ENCODE measurements at regions of chr12 and their contacts with region 1.

Region 1: GRCh38 chr12:53267999-53268647 is at the start of gene ESPL1:
- DNase-seq: peak; percentile 87
- H3K4me3 Mint-ChIP-seq: peak within 1 kb of the TSS; percentile 99
- H3K27ac Mint-ChIP-seq: peak within 1 kb of the TSS; percentile 93
- H3K4me1 Mint-ChIP-seq: peaks cover 50% of the 10 kb centered on the region
- H3K27me3 Mint-ChIP-seq: no peaks in the 10 kb centered on the region

Region 2: GRCh38 chr12:53220801-53221202 is 47.3 kb before region 1 on chr12:
- CTCF ChIA-PET with region 1: interaction called, 148 read pairs
- DNase-seq: peak; percentile 88
- H3K4me3 Mint-ChIP-seq: peak overlapping the region; percentile 99
- H3K27ac Mint-ChIP-seq: peak overlapping the region; percentile 95
- H3K4me1 Mint-ChIP-seq: peaks cover 82% of the 10 kb centered on the region
- H3K27me3 Mint-ChIP-seq: peaks cover 8% of the 10 kb centered on the region

Region 3: DNA sequence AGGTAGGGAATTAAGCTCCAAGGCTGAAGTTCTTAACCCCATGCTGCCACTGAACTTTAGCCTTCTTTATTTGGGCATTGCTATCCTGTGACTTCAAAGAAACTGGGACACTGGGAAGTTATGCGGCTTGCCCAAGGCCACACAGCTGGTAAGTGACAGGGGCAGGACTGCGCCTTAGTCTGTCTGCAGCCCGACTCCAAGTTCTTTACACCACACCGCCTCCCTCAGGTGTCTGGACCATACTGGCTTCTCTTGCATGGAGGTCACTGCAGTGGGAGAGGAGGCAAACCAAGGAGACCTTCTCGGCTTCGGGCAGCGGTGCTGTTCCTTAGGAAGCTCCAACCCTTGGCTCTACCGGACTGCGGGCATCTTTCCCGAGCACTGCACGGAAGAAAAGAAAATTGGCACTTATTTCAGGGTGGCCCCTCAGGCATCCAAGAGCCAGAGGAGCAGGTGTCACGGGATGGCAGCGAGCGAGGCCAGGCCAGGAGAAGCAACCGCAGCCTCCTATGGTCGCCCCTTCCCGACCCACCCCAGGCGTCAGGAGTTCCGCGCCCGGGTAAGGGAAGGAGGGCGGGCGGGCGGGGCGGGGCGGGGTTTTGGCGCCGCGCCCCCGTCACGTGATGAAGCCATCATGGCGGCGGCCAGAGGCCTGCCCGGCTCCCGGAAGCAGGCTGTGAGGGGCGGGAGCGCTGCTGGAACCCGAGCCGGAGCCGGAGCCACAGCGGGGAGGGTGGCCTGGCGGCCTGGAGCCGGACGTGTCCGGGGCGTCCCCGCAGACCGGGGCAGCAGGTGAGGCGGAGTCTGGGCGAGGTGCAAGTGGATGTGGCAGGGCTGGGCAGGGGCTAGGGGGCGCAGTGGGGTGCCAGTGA is 16.4 kb before region 1 on chr12:
- CTCF ChIA-PET with region 1: interaction called, 22 read pairs
- DNase-seq: peak; percentile 85
- H3K4me3 Mint-ChIP-seq: peak overlapping the region; percentile 96
- H3K27ac Mint-ChIP-seq: peak overlapping the region; percentile 89
- H3K4me1 Mint-ChIP-seq: peaks cover 48% of the 10 kb centered on the region
- H3K27me3 Mint-ChIP-seq: peaks cover 6% of the 10 kb centered on the region

Region 4: DNA sequence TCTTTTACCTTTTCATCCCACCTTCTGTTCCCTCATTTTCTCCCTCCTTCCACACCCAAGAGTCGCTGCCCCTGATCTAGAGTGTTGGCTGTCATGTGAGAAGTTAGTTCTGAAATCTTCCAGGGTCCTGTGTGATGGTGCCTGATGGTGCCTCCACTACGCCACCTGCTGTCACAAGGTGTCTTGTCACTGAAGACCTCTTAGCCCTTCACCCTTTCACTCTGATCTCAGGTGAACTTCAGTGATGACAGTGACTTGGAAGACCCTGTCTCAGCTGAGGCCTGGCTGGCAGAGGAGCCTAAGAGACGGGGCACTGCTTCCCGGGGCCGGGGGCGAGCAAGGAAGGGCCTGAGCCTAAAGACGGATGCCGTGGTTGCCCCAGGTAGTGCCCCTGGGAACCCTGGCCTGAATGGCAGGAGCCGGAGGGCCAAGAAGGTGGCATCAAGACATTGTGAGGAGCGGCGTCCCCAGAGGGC is 19.7 kb after region 1 on chr12:
- CTCF ChIA-PET with region 1: interaction called, 14 read pairs
- DNase-seq: peak; percentile 82
- H3K4me3 Mint-ChIP-seq: no peak overlapping the region
- H3K27ac Mint-ChIP-seq: peak overlapping the region; percentile 65
- H3K4me1 Mint-ChIP-seq: peaks cover 4% of the 10 kb centered on the region
- H3K27me3 Mint-ChIP-seq: no peaks in the 10 kb centered on the region

Region 5: GRCh38 chr12:53344824-53345485 is 76.8 kb after region 1 on chr12:
- CTCF ChIA-PET with region 1: interaction called, 11 read pairs
- DNase-seq: peak; percentile 81
- H3K4me3 Mint-ChIP-seq: peak overlapping the region; percentile 95
- H3K27ac Mint-ChIP-seq: peak overlapping the region; percentile 75
- H3K4me1 Mint-ChIP-seq: peaks cover 16% of the 10 kb centered on the region
- H3K27me3 Mint-ChIP-seq: peaks cover 42% of the 10 kb centered on the region